Sigmoid colon (tissue), 7 donors: ENCODE measurements at regions of chr22 and their contacts with region 1.

Region 1: DNA sequence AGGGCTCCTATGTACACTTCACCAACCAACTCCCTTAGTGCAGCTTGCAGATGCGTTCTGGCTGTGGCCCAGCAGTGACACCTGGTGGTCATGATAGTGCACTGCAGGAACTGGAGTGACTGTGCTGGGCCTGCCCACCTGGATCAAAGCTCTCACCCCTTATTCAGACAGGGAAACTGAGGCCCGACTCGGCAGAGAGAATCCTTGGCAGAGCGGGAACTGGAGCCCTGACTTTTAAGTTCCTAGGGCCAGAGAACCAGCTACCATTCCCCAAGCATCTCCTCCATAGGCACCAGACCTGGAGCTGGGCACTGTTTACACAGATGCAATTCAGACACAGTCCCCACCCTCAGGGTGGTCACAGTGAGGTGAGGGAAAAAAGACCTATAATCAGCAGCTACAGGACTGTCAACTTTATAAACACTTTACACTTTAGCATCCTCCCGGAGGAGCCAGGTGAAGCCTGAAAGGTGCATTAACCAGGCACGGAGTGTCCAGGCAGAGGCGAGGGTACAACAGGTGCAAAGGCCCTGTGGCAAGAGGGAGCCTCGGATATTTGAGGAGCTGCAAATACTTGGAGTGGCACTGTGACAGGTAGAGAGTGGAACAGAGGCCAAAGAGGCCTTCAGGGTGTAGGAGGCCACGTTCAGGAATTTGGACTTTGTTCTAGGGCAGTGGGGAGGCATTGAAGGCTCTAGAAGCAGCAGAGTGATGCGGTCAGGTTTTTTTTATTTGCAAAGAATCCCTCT is 22.0 kb downstream of the RHBDD3 start:
- DNase-seq: peak; percentile 88
- H3K4me3 ChIP-seq: no peak overlapping the region
- H3K27ac ChIP-seq: no peak overlapping the region
- H3K4me1 ChIP-seq: no peaks in the 10 kb centered on the region
- H3K27me3 ChIP-seq: no peaks in the 10 kb centered on the region
- CTCF ChIP-seq: peak; percentile 84 to 98 (median 92)
- EP300 ChIP-seq: no peak
- POLR2A ChIP-seq: no peak

Region 2: DNA sequence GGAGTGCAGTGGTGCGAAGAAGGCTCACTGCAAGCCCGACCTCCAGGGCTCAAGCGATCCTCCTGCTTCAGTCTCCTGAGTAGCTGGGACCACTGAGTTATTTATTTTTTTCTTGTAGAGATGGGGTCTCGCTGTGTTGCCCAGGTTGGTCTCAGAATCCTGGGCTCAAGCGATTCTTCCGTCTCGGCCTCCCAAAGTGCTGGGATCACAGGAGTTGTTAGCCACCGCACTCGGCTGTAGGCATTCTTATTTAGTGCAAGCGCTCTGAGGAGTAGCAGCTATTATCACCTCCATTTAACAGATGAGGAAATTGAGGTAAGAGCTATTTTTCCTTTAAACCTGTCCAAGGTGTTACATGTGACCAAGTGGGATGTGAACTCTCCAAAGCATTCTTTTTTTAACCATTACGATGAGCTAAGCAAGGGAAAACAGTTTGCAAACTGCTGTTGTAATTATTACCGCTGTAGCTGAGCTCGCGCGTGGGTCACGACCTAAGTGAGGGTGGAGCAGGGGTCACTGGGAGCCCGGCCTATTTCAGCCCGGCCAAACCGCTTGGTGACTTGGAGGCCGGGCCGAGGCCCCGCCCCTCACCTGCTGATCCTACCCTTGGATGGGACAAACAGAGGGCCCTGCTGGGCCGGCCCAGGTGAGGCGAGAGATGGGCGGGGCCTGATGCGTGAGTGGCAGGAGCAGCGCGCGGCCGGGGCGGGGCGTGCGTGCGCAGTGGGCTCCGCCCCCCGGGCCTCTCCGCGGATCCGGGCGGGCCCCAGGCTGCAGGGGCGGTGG is 173.4 kb before region 1 on chr22:
- intact Hi-C with region 1: loop called (anchors 10 kb)
- DNase-seq: peak; percentile 90
- H3K4me3 ChIP-seq: peak overlapping the region; percentile 34 to 85 (median 68)
- H3K27ac ChIP-seq: peak overlapping the region in 1 of 4 donors; percentile 45
- H3K4me1 ChIP-seq: peaks cover 0 to 31% (median 29%) of the 10 kb centered on the region in 4 donors
- H3K27me3 ChIP-seq: no peaks in the 10 kb centered on the region
- CTCF ChIP-seq: no peak
- EP300 ChIP-seq: no peak
- POLR2A ChIP-seq: no peak

Region 3: DNA sequence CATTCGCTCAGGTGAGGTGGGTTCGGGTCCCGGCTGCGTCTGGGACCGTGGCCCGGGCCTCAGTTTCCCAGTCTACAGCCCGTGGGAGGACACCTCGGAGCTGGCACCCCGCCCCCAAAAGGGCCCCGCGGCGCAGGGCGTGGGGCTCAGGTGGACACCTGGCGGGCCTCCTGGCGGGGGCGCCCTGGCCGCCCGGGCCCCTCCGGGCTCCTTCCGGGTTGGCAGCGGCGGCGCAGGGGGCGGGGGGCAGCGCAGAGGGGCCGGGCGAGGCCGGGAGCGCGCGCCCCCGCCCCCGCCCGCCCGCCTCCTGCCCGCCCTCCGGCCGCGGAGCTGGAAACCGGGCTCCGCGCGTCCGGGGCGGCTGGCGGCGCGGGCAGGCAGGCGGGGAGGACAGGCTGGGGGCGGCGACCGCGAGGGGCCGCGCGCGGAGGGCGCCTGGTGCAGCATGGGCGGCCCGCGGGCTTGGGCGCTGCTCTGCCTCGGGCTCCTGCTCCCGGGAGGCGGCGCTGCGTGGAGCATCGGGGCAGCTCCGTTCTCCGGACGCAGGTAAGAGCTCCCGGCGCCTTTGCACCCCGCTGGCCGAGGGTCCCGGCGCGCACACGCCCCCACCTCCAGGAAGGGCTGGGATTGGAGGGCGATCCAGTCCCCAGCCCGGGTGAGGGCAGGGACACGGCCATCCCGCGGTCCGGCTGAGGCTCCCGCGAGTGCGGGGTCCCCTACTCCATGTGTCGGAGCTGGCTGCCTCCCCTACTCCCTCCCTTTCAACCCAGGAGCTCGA is 40.0 kb before region 1 on chr22 and contains the start of gene EMID1:
- intact Hi-C with region 1: loop called (anchors 2 kb)
- DNase-seq: peak; percentile 76
- H3K4me3 ChIP-seq: peak within 1 kb of the TSS; percentile 30 to 55 (median 51)
- H3K27ac ChIP-seq: no peak within 1 kb of the TSS
- H3K4me1 ChIP-seq: peaks cover 0 to 12% (median 9%) of the 10 kb centered on the region in 4 donors
- H3K27me3 ChIP-seq: peaks cover 0 to 5% (median 5%) of the 10 kb centered on the region in 3 donors
- CTCF ChIP-seq: peak in 1 of 4 experiments; percentile 25
- EP300 ChIP-seq: no peak
- POLR2A ChIP-seq: no peak
- total RNA-seq, gene EMID1: 0.27 to 4.7 (median 1.2) TPM

Region 4: DNA sequence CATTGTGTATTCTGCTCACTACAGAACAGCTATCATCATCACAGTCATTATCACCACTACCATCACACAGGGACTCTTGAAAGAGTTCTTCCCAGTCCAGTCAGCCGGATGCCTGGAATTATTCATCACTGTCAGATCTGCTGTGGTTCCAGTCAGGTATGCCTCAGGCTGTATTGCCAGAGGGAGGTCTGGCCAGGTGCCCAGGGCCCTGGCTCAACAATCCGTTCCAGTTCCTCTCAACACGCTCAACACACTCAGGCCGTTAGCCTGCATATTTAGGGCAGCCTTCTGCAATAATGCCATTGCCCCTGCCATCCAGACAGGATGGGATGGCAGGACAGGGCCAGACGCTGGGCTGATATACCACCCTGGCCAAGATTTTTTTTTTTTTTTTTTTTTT is 98.3 kb after region 1 on chr22:
- intact Hi-C with region 1: no loop called
- DNase-seq: peak; percentile 94
- H3K4me3 ChIP-seq: no peak overlapping the region
- H3K27ac ChIP-seq: peak overlapping the region; percentile 63 to 79 (median 73)
- H3K4me1 ChIP-seq: peaks cover 0 to 51% (median 47%) of the 10 kb centered on the region in 4 donors
- H3K27me3 ChIP-seq: no peaks in the 10 kb centered on the region
- CTCF ChIP-seq: no peak
- EP300 ChIP-seq: peak in 1 of 4 donors; percentile 29
- POLR2A ChIP-seq: no peak